ENCODE measurements at regions of chr10 and their contacts with region 1.

Region 1: GRCh38 chr10:101060036-101060950 is 1.5 kb upstream of the KAZALD1 start:
- DNase-seq: peak; percentile 73
- H3K4me3 ChIP-seq: peak overlapping the region; percentile 83 to 100
- H3K27ac ChIP-seq: peak overlapping the region; percentile 97 to 98
- H3K4me1 ChIP-seq: peaks cover 19 to 23% of the 10 kb centered on the region in 2 experiments; a peak in 3 of 4 replicates
- H3K27me3 ChIP-seq: no peaks in the 10 kb centered on the region
- CTCF ChIP-seq: peak; percentile 96
- EP300 ChIP-seq: no peak
- RAD21 ChIP-seq: peak; percentile 85

Region 2: DNA sequence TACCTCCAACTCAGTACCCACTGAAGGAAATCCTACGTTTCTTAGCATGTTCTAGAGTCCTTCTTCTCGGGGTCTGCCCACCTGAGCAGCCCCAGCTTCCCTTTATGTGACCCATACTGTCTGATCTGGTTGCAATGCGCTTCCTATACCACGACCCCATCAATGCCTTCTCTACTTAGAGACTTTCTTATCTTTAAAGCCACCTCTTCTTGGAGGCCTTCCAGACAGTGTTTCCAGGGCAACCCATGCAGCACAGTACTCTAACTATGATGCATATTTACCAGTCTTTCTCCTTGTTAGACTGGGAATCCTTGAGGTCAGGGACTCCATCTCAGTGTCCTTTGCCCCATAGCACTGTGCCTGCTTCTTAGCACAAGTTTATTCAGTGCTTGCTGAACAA is 202.0 kb before region 1 on chr10:
- CTCF ChIA-PET with region 1: no interaction called
- POLR2A ChIA-PET with region 1: no interaction called
- DNase-seq: no peak
- H3K4me3 ChIP-seq: no peak overlapping the region
- H3K27ac ChIP-seq: no peak overlapping the region
- H3K4me1 ChIP-seq: peaks cover 0 to 9% of the 10 kb centered on the region in 2 experiments; a peak in 1 of 4 replicates
- H3K27me3 ChIP-seq: peaks cover 67% of the 10 kb centered on the region
- CTCF ChIP-seq: no peak
- EP300 ChIP-seq: no peak
- RAD21 ChIP-seq: no peak

Region 3: GRCh38 chr10:101042667-101043355 is 17.5 kb before region 1 on chr10:
- CTCF ChIA-PET with region 1: interaction called, 98 read pairs
- POLR2A ChIA-PET with region 1: interaction called, 11 read pairs
- DNase-seq: peak; percentile 91
- H3K4me3 ChIP-seq: peak overlapping the region; percentile 53 to 68
- H3K27ac ChIP-seq: peak overlapping the region; percentile 91 to 97
- H3K4me1 ChIP-seq: peaks cover 10 to 18% of the 10 kb centered on the region in 2 experiments
- H3K27me3 ChIP-seq: no peaks in the 10 kb centered on the region
- CTCF ChIP-seq: no peak
- EP300 ChIP-seq: no peak
- RAD21 ChIP-seq: no peak

Region 4: GRCh38 chr10:101080933-101081931 is 20.9 kb after region 1 on chr10:
- CTCF ChIA-PET with region 1: interaction called, 13 read pairs
- POLR2A ChIA-PET with region 1: no interaction called
- DNase-seq: no peak
- H3K4me3 ChIP-seq: no peak overlapping the region
- H3K27ac ChIP-seq: no peak overlapping the region
- H3K4me1 ChIP-seq: peaks cover 0 to 21% of the 10 kb centered on the region in 2 experiments; a peak in 1 of 4 replicates
- H3K27me3 ChIP-seq: peaks cover 32% of the 10 kb centered on the region; the same call in 1 of the 2 replicates
- CTCF ChIP-seq: no peak
- EP300 ChIP-seq: no peak; a peak in 1 of 4 replicates
- RAD21 ChIP-seq: no peak